ENCODE measurements at regions of chr5 and their contacts with region 1.

Region 1: DNA sequence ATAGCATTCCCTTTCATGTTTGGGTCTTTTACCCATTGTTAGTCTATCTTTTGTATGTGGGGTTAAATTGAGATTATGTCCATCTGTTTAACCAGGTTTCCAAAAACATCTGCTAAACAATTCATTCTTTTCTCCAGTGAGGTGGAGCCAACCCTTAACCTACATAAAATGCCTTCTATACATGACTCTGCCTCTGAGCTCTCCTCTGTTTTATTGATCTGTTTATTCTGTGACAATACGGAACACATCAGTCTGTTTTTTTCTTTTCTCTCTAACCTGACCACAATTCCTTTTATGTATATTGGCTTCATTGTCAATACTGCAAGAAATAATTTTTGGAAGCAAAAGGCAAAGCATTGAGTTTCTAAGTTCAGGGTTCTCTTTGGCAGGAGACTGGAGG is 9.9 kb upstream of the ARL15 start:
- DNase-seq: no peak
- ATAC-seq: no peak
- H3K4me3 ChIP-seq: no peak overlapping the region
- H3K27ac ChIP-seq: no peak overlapping the region
- H3K4me1 ChIP-seq: no peaks in the 10 kb centered on the region
- H3K27me3 ChIP-seq: no peaks in the 10 kb centered on the region
- CTCF ChIP-seq: no peak

Region 2: DNA sequence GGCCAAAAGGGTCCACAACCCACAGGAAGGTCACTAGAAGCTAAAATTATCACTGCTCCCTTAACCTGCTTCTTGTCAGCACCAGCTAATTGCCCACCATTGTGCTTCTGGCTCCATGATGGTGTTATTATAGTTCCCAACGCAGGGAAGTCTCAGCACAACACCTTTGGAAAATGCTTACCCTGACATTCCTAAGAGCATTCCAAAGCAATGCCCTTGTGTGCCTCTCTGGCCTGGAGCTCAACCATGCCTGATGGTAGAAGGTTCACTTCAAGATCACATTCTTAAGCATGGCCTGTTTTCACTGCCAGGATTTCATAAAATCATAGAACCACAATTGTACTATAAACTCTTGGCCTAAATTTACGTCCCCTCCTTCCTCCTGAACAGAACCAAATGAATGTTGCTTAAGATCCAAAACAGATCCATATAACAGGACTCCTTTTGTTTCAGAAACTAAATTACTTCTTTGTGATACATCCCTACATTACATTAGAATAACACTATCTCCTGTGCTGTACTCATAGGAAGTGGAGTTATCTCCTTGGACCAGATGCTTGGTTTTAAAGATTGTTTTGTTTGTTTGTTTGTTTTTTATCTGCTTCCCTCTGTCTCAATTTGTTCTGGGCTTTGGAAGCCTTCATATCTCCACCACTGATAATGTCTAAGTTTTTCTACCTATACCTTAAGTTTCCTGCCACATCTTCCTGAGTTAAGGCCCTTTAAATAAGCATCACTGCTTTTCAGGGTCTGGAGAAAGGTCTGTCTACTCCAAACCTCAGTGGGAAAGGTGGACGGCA is 42.0 kb before region 1 on chr5:
- intact Hi-C with region 1: no loop called
- DNase-seq: no peak
- ATAC-seq: no peak
- H3K4me3 ChIP-seq: no peak overlapping the region
- H3K27ac ChIP-seq: no peak overlapping the region
- H3K4me1 ChIP-seq: no peaks in the 10 kb centered on the region
- H3K27me3 ChIP-seq: no peaks in the 10 kb centered on the region
- CTCF ChIP-seq: no peak

Region 3: DNA sequence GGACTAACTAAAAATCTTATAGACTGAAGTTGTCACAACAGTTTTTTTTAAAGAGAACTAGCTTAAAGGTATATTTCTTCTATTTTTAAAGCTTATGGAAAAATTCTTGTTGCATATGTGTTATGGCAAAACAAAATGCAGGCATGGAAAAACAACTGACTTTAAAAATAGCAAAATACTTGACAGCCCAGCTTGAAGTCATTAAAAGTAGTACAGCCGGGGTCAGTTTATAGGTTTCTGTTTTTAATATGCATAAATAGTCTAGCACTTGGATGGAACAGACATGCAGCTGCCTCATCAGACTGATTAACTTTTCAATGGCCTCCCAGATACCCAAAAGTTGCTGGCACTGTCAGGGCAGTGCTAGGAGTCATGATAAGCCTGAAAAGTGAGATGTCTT is 12.5 kb after region 1 on chr5:
- intact Hi-C with region 1: loop called in 1 of 2 experiments (anchors 1 kb)
- DNase-seq: no peak
- ATAC-seq: no peak
- H3K4me3 ChIP-seq: no peak overlapping the region
- H3K27ac ChIP-seq: no peak overlapping the region
- H3K4me1 ChIP-seq: no peaks in the 10 kb centered on the region
- H3K27me3 ChIP-seq: no peaks in the 10 kb centered on the region
- CTCF ChIP-seq: no peak

Region 4: GRCh38 chr5:55407059-55407684 is 1086.9 kb after region 1 on chr5:
- intact Hi-C with region 1: no loop called
- DNase-seq: no peak
- ATAC-seq: peak in 3 of 4 donors; percentile 71 to 91 (median 87)
- H3K4me3 ChIP-seq: no peak overlapping the region
- H3K27ac ChIP-seq: no peak overlapping the region
- H3K4me1 ChIP-seq: no peaks in the 10 kb centered on the region
- H3K27me3 ChIP-seq: no peaks in the 10 kb centered on the region
- CTCF ChIP-seq: peak; percentile 69